ENCODE measurements at regions of chr10 and their contacts with region 1.

Region 1: DNA sequence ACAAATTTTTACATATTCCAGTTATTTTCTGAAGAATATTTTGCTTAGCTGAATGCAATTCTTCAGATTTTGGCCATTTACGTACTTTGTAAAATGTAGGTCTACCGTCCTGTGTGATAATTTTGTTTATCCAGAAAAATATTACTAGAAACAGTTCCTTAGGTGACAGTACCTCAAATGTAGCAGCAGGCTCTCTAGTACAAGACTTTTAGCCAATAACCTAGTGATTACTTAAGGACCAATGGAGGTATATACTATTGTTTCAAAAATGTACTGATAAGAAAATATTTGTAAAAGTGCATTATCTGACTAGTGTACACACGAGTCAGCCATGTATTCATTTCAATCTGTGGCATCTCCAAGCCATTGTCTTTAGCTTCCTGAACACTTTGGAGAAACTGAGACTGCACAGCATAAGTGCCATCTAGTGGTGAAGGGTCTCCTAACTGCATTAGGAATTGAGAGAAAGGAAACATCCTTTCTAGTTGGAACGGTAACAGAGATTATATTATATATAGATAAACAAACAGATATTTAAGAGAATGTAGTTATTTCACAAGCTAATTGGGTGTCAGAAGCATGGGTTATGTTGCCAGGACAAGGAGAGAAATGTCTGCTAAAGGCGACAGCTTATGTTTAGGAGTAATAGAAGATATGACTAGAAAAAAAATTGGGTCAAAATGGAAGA is 23.7 kb downstream of the RTKN2 start:
- DNase-seq: peak; percentile 99
- ATAC-seq: peak; percentile 42
- H3K4me3 ChIP-seq: no peak overlapping the region
- H3K27ac ChIP-seq: peak overlapping the region; percentile 3
- H3K4me1 ChIP-seq: peaks cover 60% of the 10 kb centered on the region
- H3K27me3 ChIP-seq: no peaks in the 10 kb centered on the region
- CTCF ChIP-seq: peak; percentile 100

Region 2: DNA sequence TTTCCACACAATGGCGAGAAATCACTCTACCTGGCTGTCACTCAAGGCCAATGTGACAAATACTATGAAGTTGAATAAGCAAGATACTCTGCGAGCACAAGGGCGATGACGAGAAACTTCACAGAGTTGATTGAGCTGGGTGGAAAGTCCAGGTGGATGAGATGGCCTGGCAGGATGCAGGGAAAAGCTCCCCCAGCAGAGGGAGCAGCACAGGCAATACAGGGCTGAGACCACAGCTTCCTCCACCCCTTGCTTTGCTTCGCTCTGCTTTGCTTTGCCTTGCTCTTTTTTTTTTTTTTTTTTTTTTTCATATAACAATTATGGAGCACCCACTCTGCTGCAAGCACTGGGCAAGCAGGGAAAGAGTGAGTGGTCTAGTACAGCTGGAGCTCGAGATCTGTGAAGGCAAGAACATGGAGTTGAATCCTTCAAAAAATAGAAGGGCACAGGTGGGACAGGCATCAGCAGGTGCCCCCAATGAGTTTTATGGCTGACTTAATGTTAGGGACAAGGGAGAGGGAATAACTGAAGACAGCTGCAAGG is 493.9 kb before region 1 on chr10:
- CTCF ChIA-PET with region 1: interaction called, 3 read pairs
- POLR2A ChIA-PET with region 1: no interaction called
- intact Hi-C with region 1: loop called (anchors 1 kb)
- DNase-seq: peak; percentile 98
- ATAC-seq: peak; percentile 83
- H3K4me3 ChIP-seq: no peak overlapping the region
- H3K27ac ChIP-seq: peak overlapping the region; percentile 48
- H3K4me1 ChIP-seq: peaks cover 26% of the 10 kb centered on the region
- H3K27me3 ChIP-seq: no peaks in the 10 kb centered on the region
- CTCF ChIP-seq: peak; percentile 100

Region 3: DNA sequence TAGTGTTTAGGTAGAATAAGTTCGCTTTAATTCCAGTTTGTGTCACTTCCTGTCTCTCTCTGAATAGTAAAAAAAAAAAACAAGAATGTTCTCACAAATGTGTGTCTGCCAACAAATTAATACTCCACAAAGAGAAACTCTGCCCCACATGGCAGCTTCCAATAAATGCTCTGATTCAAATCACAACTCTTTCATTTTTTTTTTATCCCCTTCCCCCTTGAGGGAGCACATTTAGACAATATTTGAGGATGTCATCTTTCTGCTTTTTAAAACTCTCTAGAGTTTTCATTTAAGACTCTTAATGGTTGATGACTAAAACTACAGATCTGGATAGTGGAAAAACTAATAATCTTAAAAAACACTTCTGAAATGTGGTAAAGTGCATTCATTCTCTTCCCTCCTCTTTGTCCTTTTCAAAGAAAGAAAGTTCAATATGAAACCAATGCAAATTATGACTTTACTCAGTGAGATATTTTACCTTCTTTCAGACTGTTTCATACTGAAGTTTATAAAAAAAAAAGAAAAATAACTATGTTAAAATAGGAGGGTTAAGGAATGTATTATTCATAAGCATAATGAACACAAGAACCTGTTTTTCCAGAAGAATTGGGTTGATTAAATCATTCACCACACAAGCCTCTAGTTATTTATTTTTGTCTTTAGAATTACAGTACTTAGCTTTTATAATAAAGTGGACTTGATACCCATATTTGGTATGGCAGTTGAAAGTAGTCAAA is 301.1 kb before region 1 on chr10:
- CTCF ChIA-PET with region 1: no interaction called
- POLR2A ChIA-PET with region 1: no interaction called
- intact Hi-C with region 1: loop called (anchors 1 kb)
- DNase-seq: peak; percentile 99
- ATAC-seq: peak; percentile 14
- H3K4me3 ChIP-seq: peak overlapping the region; percentile 31
- H3K27ac ChIP-seq: peak overlapping the region; percentile 72
- H3K4me1 ChIP-seq: peaks cover 65% of the 10 kb centered on the region
- H3K27me3 ChIP-seq: no peaks in the 10 kb centered on the region
- CTCF ChIP-seq: peak; percentile 73

Region 4: GRCh38 chr10:62082729-62083411 is 162.1 kb before region 1 on chr10:
- CTCF ChIA-PET with region 1: interaction called, 31 read pairs
- POLR2A ChIA-PET with region 1: no interaction called
- intact Hi-C with region 1: loop called (anchors 1 kb)
- DNase-seq: peak; percentile 69
- ATAC-seq: peak; percentile 58
- H3K4me3 ChIP-seq: peak overlapping the region; percentile 24
- H3K27ac ChIP-seq: peak overlapping the region; percentile 54
- H3K4me1 ChIP-seq: peaks cover 53% of the 10 kb centered on the region
- H3K27me3 ChIP-seq: no peaks in the 10 kb centered on the region
- CTCF ChIP-seq: no peak

Region 5: GRCh38 chr10:62136899-62137298 is 108.0 kb before region 1 on chr10:
- CTCF ChIA-PET with region 1: interaction called, 4 read pairs
- POLR2A ChIA-PET with region 1: no interaction called
- intact Hi-C with region 1: loop called (anchors 1 kb)
- DNase-seq: peak; percentile 100
- ATAC-seq: peak; percentile 85
- H3K4me3 ChIP-seq: no peak overlapping the region
- H3K27ac ChIP-seq: peak overlapping the region; percentile 76
- H3K4me1 ChIP-seq: peaks cover 25% of the 10 kb centered on the region
- H3K27me3 ChIP-seq: no peaks in the 10 kb centered on the region
- CTCF ChIP-seq: no peak

Region 6: GRCh38 chr10:62231371-62231770 is 13.6 kb before region 1 on chr10:
- CTCF ChIA-PET with region 1: interaction called, 3 read pairs
- POLR2A ChIA-PET with region 1: interaction called, 4 read pairs
- intact Hi-C with region 1: loop called (anchors 1 kb)
- DNase-seq: peak; percentile 99
- ATAC-seq: peak; percentile 76
- H3K4me3 ChIP-seq: peak overlapping the region; percentile 25
- H3K27ac ChIP-seq: peak overlapping the region; percentile 73
- H3K4me1 ChIP-seq: peaks cover 55% of the 10 kb centered on the region
- H3K27me3 ChIP-seq: no peaks in the 10 kb centered on the region
- CTCF ChIP-seq: no peak

Region 7: DNA sequence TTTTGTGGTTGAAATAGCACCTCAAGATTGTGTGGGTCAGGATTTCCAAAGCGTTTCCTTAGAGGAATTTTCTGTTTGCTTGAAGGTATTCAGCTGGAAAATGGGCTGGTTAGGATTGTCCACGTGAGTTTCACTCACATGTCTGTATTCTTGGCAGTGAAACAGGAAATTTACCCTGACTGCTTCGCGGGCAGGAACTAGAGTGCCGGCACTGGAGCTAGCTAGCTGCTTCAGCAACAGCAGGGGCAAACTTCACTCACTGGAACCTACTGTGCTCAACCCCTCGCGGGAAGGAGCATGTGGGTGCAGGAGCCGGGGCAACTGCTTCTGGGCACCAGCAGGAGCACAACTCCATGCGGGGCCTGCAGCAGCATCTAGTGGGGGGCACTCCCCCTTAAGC is 61.7 kb after region 1 on chr10:
- CTCF ChIA-PET with region 1: no interaction called
- POLR2A ChIA-PET with region 1: no interaction called
- intact Hi-C with region 1: no loop called
- DNase-seq: no peak
- ATAC-seq: no peak
- H3K4me3 ChIP-seq: no peak overlapping the region
- H3K27ac ChIP-seq: no peak overlapping the region
- H3K4me1 ChIP-seq: peaks cover 18% of the 10 kb centered on the region
- H3K27me3 ChIP-seq: no peaks in the 10 kb centered on the region
- CTCF ChIP-seq: no peak

Region 8: GRCh38 chr10:63157845-63158624 is 913.1 kb after region 1 on chr10:
- CTCF ChIA-PET with region 1: no interaction called
- POLR2A ChIA-PET with region 1: no interaction called
- intact Hi-C with region 1: loop called (anchors 1 kb)
- DNase-seq: peak; percentile 99
- ATAC-seq: peak; percentile 80
- H3K4me3 ChIP-seq: no peak overlapping the region
- H3K27ac ChIP-seq: peak overlapping the region; percentile 17
- H3K4me1 ChIP-seq: peaks cover 7% of the 10 kb centered on the region; the same call in 1 of the 2 replicates
- H3K27me3 ChIP-seq: no peaks in the 10 kb centered on the region
- CTCF ChIP-seq: peak; percentile 100

Region 9: DNA sequence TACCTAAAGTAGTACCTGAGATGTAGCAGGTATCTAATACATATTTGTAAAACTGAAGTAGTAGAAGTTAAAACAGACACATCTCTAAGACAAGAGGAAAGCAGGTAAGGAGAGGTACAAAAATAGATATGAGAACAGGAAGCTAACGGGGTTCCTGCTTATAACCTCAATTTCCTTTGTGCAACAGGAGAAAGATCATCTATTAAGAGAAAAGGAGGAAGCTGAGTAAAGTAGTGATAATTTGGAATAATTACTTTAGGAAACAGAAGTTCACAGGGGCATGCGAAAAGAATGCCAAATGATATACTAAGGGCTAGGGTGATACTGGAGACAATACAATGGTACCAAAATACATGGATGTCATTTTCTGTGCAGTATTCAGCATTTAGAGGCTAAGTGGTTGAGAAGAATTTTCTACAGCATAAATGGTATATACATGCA is 996.9 kb after region 1 on chr10:
- CTCF ChIA-PET with region 1: no interaction called
- POLR2A ChIA-PET with region 1: no interaction called
- intact Hi-C with region 1: no loop called
- DNase-seq: no peak
- ATAC-seq: no peak
- H3K4me3 ChIP-seq: no peak overlapping the region
- H3K27ac ChIP-seq: no peak overlapping the region
- H3K4me1 ChIP-seq: peaks cover 37% of the 10 kb centered on the region
- H3K27me3 ChIP-seq: no peaks in the 10 kb centered on the region
- CTCF ChIP-seq: no peak